ENCODE measurements at regions of chrX and their contacts with region 1.

Region 1: GRCh38 chrX:109714340-109714958 is 18.6 kb downstream of the ACSL4 start:
- DNase-seq: no peak
- ATAC-seq: peak in 1 of 2 donors; percentile 66

Region 2: GRCh38 chrX:109511113-109511512 is 203.3 kb before region 1 on chrX:
- intact Hi-C with region 1: no loop called
- DNase-seq: no peak
- ATAC-seq: no peak

Region 3: DNA sequence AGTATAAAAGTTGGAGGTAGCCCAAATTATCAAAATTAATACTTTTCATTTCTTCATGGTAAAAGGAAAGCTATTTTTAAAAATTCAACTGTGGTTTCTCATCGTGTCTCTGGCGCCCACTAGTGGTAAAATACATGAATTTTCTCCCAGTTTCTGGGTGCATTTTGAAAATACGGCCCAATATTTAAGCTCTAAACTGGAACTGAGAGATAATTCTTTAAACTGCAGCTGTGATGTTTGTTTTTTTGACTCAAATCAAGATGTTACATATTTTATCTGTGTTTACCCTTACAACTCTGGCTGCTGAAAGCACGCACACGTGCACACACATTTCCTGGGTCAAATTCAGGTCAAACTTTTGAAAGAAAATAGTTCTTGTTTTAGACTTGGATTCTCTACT is 142.5 kb after region 1 on chrX:
- intact Hi-C with region 1: loop called in 1 of 2 experiments (anchors 5 kb)
- DNase-seq: no peak
- ATAC-seq: no peak

Region 4: DNA sequence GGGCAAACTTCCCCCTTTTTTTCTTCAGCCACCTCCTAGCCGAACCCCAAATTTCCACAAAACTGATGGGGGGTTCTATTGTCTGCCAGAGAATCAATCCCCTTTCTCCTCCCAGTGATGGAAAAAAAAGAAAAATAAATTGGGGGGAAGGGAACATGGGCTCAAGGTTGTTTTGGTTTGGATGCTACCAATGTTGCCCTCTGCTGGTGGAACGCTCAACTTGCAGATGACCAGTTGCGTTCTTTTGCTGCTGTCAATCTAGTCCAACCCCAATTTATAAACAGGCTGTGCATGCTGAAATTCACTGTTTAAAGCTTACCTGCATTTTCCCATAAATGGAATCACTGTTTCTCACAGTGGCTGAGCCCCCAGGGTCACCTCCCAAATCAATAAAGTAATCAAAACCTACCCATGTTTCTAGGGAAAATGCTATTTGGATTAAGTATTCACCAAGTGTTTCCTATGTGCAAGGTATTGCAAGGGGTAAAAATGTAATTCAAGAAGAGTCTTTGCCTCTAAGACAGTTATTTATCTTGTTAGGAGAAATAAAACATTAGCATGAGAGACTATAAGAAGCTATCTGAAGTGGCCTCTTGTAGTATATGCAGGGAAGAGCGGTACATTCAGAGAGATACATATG is 171.8 kb after region 1 on chrX:
- intact Hi-C with region 1: loop called in 1 of 2 experiments (anchors 10 kb)
- DNase-seq: peak; percentile 33
- ATAC-seq: no peak

Region 5: GRCh38 chrX:110097920-110098319 is 383.5 kb after region 1 on chrX:
- intact Hi-C with region 1: no loop called
- DNase-seq: no peak
- ATAC-seq: no peak